Endothelial cell of umbilical vein (primary cell): ENCODE measurements at regions of chr15 and their contacts with region 1.

Region 1: GRCh38 chr15:34701536-34701935 is 53.3 kb downstream of the GJD2 start:
- DNase-seq: no peak
- H3K4me3 ChIP-seq: no peak overlapping the region
- H3K27ac ChIP-seq: no peak overlapping the region
- H3K4me1 ChIP-seq: peaks cover 7% of the 10 kb centered on the region
- H3K27me3 ChIP-seq: no peaks in the 10 kb centered on the region
- CTCF ChIP-seq: no peak
- POLR2A ChIP-seq: no peak

Region 2: DNA sequence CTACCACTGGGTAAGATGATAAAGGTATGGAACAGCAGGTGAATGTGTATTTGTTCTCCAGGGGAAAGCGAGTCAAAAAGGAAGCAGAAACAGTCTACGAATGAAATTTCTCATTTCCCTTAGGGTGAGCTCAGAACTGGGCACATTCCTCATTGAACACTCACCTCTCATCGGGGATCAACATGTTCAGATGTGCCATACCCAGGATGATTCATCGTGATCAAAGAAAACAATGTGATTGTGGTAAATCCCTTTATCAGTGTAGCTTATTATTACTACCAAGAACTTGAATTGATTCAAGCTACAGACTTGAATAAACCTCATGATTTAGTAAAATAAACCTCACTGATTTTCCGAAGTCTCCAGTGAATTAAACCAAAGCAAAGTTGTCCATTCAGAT is 18.9 kb before region 1 on chr15:
- CTCF ChIA-PET with region 1: interaction called, 3 read pairs
- POLR2A ChIA-PET with region 1: no interaction called
- dilution Hi-C with region 1: no loop called
- intact Hi-C with region 1: loop called (anchors 1 kb)
- DNase-seq: peak; percentile 74
- H3K4me3 ChIP-seq: no peak overlapping the region
- H3K27ac ChIP-seq: peak overlapping the region; percentile 69
- H3K4me1 ChIP-seq: peaks cover 12% of the 10 kb centered on the region
- H3K27me3 ChIP-seq: no peaks in the 10 kb centered on the region
- CTCF ChIP-seq: no peak
- POLR2A ChIP-seq: no peak